AG04449 (cell line): ENCODE measurements at regions of chr19 and their contacts with region 1.

Region 1: DNA sequence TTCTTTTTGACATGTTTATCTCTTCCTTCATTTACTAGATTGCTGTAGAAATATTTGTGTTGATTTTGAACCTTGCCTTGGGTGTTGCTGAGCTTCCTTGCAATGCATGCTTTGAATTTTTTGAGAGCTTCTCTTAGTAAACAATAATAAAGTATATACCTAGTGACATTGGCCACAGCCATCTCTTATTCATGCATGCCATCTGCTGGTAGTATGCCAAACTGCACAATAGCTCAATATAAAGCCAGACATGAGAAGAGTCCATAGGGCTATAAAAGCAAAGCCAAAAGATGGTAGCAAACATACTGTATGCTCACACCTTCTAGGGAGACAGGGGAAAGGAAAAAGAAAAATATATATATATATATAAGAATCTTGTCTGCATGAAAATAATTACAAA is 18.9 kb upstream of the ZSCAN5A start:
- DNase-seq: no peak
- H3K4me3 ChIP-seq: no peak overlapping the region
- CTCF ChIP-seq: peak; percentile 67

Region 2: GRCh38 chr19:56066152-56067023 is 267.1 kb before region 1 on chr19:
- CTCF ChIA-PET with region 1: interaction called, 47 read pairs
- POLR2A ChIA-PET with region 1: no interaction called
- DNase-seq: no peak
- H3K4me3 ChIP-seq: peak overlapping the region; percentile 36
- CTCF ChIP-seq: peak; percentile 93

Region 3: GRCh38 chr19:56261145-56261544 is 72.4 kb before region 1 on chr19:
- CTCF ChIA-PET with region 1: interaction called, 207 read pairs
- POLR2A ChIA-PET with region 1: no interaction called
- DNase-seq: no peak
- H3K4me3 ChIP-seq: no peak overlapping the region
- CTCF ChIP-seq: no peak

Region 4: DNA sequence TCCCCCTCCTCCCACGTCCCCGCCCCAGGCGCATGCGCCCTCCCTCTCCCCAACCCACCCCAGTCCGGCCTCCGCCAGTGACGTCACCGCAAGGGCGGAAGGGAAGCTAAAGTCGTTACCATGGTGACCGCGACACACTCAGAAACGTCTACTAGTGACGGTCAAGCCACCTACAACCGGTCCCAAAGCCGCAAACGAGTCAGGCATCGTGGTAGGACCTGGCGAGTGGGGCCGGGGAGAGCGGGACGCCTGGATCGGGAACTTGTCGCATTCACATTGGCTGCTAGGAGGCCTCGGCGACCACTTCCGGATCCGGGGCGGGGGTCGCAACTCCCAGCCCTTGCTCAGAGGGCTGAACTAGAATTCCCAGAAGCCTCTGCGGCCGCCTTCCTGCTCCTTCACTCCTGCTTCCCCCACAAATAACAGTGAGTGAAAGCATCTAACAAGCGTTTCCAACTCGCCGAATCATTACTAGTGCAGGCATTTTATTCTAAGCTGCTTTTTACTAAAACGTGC is 18.9 kb before region 1 on chr19 and contains the start of gene ZSCAN5A:
- CTCF ChIA-PET with region 1: interaction called, 11 read pairs
- POLR2A ChIA-PET with region 1: no interaction called
- DNase-seq: peak; percentile 62
- H3K4me3 ChIP-seq: peak within 1 kb of the TSS; percentile 95
- CTCF ChIP-seq: no peak

Region 5: GRCh38 chr19:56350416-56351045 is 17.0 kb after region 1 on chr19:
- CTCF ChIA-PET with region 1: interaction called, 23 read pairs
- POLR2A ChIA-PET with region 1: no interaction called
- DNase-seq: no peak
- H3K4me3 ChIP-seq: no peak overlapping the region
- CTCF ChIP-seq: peak; percentile 79

Region 6: DNA sequence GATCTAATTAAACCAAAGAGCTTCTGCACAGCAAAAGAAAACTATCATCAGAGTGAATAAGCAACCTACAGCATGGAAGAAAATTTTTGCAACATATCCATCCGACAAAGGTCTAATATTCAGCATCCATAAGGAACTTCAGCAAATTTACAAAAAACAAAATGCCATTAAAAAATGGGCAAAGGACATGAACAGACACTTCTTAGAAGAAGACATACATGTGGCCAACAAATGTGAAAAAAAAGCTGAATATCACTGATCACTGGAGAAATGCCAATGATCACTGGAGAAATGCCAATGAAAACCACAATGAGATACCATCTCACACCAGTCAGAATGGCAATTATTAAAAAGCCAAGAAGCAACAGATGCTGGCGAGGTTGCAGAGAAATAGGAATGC is 27.3 kb after region 1 on chr19:
- CTCF ChIA-PET with region 1: no interaction called
- POLR2A ChIA-PET with region 1: no interaction called
- DNase-seq: no peak
- H3K4me3 ChIP-seq: no peak overlapping the region
- CTCF ChIP-seq: no peak